Activated B cell treated with CpG ODN at 0.5 μM for 24 hours (primary cell): ENCODE measurements at regions of chr5 and their contacts with region 1.

Region 1: GRCh38 chr5:142324871-142325724 is at the start of gene SPRY4:
- DNase-seq: peak; percentile 70
- ATAC-seq: peak; percentile 77
- H3K4me3 Mint-ChIP-seq: peak within 1 kb of the TSS; percentile 85
- H3K27ac Mint-ChIP-seq: no peak within 1 kb of the TSS
- H3K4me1 Mint-ChIP-seq: peaks cover 41% of the 10 kb centered on the region
- H3K27me3 Mint-ChIP-seq: peaks cover 66% of the 10 kb centered on the region
- CTCF ChIP-seq: no peak
- total RNA-seq, gene SPRY4: not detected in 2 replicates

Region 2: GRCh38 chr5:142422429-142422828 is 97.3 kb after region 1 on chr5:
- CTCF ChIA-PET with region 1: no interaction called
- POLR2A ChIA-PET with region 1: interaction called, 3 read pairs
- intact Hi-C with region 1: loop called (anchors 1 kb)
- DNase-seq: no peak
- ATAC-seq: no peak
- H3K4me3 Mint-ChIP-seq: no peak overlapping the region
- H3K27ac Mint-ChIP-seq: no peak overlapping the region
- H3K4me1 Mint-ChIP-seq: peaks cover 55% of the 10 kb centered on the region
- H3K27me3 Mint-ChIP-seq: peaks cover 3% of the 10 kb centered on the region
- CTCF ChIP-seq: no peak

Region 3: GRCh38 chr5:142548739-142549275 is 223.7 kb after region 1 on chr5:
- CTCF ChIA-PET with region 1: interaction called, 3 read pairs
- POLR2A ChIA-PET with region 1: no interaction called
- intact Hi-C with region 1: loop called (anchors 10 kb)
- DNase-seq: no peak
- ATAC-seq: no peak
- H3K4me3 Mint-ChIP-seq: no peak overlapping the region
- H3K27ac Mint-ChIP-seq: no peak overlapping the region
- H3K4me1 Mint-ChIP-seq: peaks cover 10% of the 10 kb centered on the region
- H3K27me3 Mint-ChIP-seq: peaks cover 19% of the 10 kb centered on the region
- CTCF ChIP-seq: no peak